ENCODE measurements at regions of chr6 and their contacts with region 1.

Region 1: GRCh38 chr6:32244946-32245398 is 21.1 kb upstream of the NOTCH4 start:
- DNase-seq: peak; percentile 61 to 93 (median 84)

Region 2: DNA sequence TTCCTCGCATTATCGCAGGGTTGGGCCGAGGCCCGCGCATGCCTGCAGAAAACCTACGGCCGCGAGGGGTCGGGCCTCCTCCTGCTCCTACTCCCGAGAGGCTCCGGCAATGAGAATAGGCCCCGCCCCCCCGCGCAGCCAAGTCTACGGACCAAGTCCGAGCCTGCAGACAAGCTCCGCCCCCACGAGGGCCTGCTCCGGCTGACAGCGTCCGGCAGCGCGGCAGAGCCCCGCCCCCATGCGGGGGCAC is 49.4 kb before region 1 on chr6:
- intact Hi-C with region 1: loop called (anchors 2 kb)
- DNase-seq: peak; percentile 100

Measured in head of caudate nucleus (tissue), 42 donors.